OCI-LY7 (cell line): ENCODE measurements at regions of chr11 and their contacts with region 1.

Region 1: DNA sequence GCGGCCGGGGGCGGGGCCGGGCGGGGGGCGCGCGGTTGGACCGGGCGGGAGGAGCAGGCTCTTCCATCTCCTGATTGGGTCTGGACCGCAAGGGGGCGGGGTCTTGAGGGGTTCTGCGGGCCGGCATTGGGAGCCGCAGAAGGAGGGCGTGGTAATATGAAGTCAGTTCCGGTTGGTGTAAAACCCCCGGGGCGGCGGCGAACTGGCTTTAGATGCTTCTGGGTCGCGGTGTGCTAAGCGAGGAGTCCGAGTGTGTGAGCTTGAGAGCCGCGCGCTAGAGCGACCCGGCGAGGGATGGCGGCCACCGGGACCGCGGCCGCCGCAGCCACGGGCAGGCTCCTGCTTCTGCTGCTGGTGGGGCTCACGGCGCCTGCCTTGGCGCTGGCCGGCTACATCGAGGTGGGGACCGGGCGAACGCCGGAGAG is at the start of gene APLP2:
- DNase-seq: peak; percentile 99
- H3K4me3 ChIP-seq: peak within 1 kb of the TSS; percentile 81
- H3K27ac ChIP-seq: peak within 1 kb of the TSS; percentile 57
- H3K4me1 ChIP-seq: peaks cover 49% of the 10 kb centered on the region
- CTCF ChIP-seq: no peak
- total RNA-seq, gene APLP2: 144 and 147 TPM in 2 replicates

Region 2: GRCh38 chr11:129922674-129923073 is 147.0 kb before region 1 on chr11:
- CTCF ChIA-PET with region 1: no interaction called
- POLR2A ChIA-PET with region 1: interaction called, 4 read pairs
- intact Hi-C with region 1: loop called (anchors 1 kb)
- DNase-seq: no peak
- H3K4me3 ChIP-seq: no peak overlapping the region
- H3K27ac ChIP-seq: no peak overlapping the region
- H3K4me1 ChIP-seq: peaks cover 20% of the 10 kb centered on the region
- CTCF ChIP-seq: no peak

Region 3: DNA sequence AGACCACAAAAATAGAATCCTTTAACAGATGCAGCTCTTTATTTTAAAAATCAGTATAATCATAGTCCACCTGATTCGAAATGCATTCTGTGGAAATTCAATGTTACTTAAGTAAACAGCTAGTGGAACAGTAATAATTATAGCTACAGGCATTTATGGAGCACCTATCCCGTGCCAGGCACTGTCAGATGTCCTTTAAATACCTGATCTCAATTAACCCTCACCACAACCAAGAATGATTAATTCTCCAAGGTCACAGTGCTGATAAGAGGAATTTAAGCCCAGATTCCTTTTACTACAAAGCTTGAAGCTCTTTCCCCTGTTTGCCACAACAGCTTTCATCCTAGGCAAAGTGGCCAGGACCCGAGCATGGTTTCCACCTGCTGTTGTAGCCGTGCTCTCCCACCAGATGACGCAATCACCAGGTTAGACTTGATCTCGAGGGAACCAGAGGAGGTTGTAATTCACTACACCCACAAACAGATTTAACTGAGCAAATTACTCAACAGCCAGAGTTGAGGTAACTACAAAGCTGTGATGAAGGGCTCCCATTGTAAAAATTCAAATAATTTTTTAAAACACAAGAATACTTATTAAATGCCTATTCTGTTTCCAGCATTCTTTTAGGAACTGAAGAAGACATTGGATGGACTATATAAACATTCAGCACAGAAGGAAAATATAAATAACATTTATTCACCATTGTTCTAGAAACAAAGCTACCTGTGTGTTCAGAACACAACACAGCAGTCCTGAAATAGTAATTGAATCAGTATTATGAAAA is 77.3 kb before region 1 on chr11:
- CTCF ChIA-PET with region 1: interaction called, 5 read pairs
- POLR2A ChIA-PET with region 1: interaction called, 24 read pairs
- intact Hi-C with region 1: no loop called
- DNase-seq: peak; percentile 91
- H3K4me3 ChIP-seq: no peak overlapping the region
- H3K27ac ChIP-seq: peak overlapping the region; percentile 45
- H3K4me1 ChIP-seq: peaks cover 56% of the 10 kb centered on the region
- CTCF ChIP-seq: peak; percentile 92

Region 4: GRCh38 chr11:130008326-130008725 is 61.4 kb before region 1 on chr11:
- CTCF ChIA-PET with region 1: interaction called, 6 read pairs
- POLR2A ChIA-PET with region 1: interaction called, 44 read pairs
- intact Hi-C with region 1: loop called (anchors 1 kb)
- DNase-seq: no peak
- H3K4me3 ChIP-seq: no peak overlapping the region
- H3K27ac ChIP-seq: no peak overlapping the region
- H3K4me1 ChIP-seq: peaks cover 64% of the 10 kb centered on the region
- CTCF ChIP-seq: no peak

Region 5: GRCh38 chr11:130022798-130023583 is 46.7 kb before region 1 on chr11:
- CTCF ChIA-PET with region 1: interaction called, 3 read pairs
- POLR2A ChIA-PET with region 1: interaction called, 10 read pairs
- intact Hi-C with region 1: loop called (anchors 2 kb)
- DNase-seq: peak; percentile 98
- H3K4me3 ChIP-seq: peak overlapping the region; percentile 49
- H3K27ac ChIP-seq: peak overlapping the region; percentile 76
- H3K4me1 ChIP-seq: peaks cover 75% of the 10 kb centered on the region
- CTCF ChIP-seq: no peak

Region 6: DNA sequence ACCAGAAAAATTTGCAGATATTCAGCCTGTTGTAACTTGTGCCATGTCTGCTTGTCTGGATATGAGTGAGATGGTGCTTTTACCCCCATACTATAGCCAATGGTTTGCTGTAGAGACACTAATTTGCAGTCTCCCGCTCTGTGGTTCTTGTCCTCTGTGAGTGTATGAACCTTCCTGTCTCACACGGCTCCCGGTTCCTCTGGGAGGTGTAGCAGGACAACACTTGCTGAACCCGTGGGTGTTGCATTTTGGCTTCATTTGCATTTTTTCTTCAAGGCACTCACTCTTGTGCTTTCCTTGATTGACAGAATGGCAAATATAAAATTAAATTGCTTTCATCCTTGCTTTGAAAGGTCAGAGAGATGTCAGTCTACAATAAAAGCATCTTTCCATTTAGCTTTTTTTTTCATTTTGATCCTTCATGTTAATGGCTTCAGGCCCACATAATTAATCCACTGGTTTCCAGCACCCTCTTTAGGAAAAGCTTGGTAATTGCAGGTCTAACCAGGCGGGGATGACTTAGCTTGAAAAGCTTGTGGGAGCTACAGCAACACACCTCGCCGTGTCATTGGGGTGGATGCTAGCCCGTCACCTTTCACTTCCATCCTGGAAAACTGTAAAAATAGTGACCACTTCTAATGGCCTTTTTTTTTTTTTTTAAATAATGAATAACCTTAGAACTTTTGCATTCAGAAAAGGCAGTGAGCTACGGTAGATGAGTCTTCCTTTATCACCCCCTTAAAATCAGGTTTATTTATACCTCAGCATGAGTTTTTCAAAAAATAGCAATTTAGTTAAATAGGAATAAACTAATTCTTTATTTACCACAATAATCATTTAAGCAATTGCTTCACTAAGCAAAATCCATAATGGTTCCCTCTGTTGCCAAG is 62.5 kb after region 1 on chr11:
- CTCF ChIA-PET with region 1: interaction called, 7 read pairs
- POLR2A ChIA-PET with region 1: interaction called, 14 read pairs
- intact Hi-C with region 1: loop called (anchors 1 kb)
- DNase-seq: peak; percentile 83
- H3K4me3 ChIP-seq: no peak overlapping the region
- H3K27ac ChIP-seq: peak overlapping the region; percentile 51
- H3K4me1 ChIP-seq: peaks cover 23% of the 10 kb centered on the region
- CTCF ChIP-seq: peak; percentile 99